Right ventricle myocardium inferior (tissue), 1 donor: ENCODE measurements at regions of chr1 and their contacts with region 1.

Region 1: GRCh38 chr1:27284425-27285273 is 37.3 kb upstream of the TMEM222 start:
- DNase-seq: peak; percentile 88
- ATAC-seq: peak; percentile 71

Region 2: DNA sequence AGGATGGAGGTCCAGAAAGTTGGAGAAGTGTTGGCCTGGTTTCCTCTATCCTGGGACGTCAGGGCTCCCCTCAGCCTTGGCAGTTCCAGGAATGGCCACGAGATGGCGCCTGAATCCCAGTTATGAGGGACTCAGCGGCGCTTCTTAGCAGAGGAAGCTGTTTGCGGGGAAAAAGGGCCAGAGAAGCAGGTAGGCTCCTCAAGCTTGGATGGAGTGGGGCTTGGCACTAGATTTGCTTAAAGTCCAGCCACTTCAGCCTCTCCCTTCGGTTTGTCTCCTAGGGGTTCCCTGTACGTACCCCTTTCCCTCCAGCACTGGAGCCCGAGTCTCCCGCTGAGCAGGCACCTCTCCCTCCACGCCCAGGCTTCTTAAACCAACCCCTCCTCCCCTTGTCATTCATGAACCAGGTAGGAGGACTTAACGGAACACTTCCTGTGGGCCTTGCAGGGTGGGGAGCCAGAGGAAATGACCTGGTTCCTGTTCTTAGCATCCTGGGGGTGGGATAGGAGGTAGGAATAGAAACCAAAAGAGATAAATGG is 240.0 kb before region 1 on chr1:
- intact Hi-C with region 1: loop called (anchors 5 kb)
- DNase-seq: peak; percentile 92
- ATAC-seq: peak; percentile 92

Region 3: DNA sequence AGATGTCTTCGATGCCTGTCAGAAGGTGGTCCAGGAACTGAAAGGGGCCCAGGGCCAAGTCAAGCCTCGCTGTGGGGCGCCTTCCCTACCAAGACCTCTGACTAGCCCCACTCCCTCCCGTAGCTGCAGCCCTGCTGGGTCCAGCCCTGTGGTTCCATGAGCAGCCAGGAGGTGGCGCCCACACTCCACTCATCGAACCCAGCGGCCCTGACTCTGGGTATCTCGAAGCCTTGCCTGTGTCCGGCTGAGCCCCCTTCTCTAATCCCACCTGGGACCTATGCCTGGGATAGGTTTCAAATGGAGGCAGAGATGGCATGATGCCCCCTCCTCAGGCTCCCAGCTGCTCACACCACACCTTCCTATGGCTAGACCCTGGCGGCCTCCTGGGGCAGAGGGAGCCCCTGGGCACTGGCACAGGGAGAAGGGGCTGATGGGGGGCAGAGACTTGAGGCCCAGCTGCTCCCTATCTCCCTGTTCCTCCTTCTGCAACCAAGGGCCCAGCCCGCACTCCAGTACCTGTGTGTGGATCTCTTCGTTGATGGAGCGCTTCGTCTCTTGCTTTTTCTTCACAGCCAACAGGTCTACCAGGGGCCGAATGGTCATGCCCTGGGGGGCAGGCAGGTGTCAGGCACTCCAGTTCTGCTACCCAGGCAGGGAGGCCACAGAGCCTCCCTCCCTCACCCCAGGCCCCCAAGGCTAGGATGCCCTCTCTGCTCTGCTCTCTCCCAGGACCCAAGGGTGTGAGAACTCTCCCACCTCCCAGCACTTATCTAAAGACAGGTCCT is 181.8 kb before region 1 on chr1:
- intact Hi-C with region 1: loop called (anchors 1 kb)
- DNase-seq: peak; percentile 88
- ATAC-seq: peak; percentile 34

Region 4: DNA sequence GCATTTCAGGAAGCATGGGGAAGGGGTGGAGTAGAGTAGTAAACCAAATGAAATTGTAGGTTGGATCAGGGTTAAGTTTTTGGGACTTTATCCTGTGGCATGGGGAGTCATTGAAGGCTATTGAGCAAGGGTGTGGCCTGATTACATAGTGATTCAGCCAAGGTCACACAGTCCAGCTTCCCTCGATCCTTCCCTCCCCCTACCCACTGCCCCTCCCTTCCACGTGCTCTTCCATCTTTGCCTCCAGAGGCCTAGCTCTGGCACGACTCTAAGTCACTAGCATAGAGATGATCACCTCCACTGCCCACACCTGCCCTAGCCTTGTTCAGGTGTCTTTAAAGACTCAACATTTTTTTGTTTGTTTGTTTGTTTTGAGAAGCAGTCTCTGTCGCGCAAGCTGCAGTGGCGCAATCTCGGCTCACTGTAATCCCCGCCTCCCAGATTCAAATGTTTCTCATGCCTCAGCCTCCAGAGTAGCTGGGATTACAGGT is 92.6 kb before region 1 on chr1:
- intact Hi-C with region 1: loop called (anchors 5 kb)
- DNase-seq: no peak
- ATAC-seq: no peak

Region 5: GRCh38 chr1:27388337-27389005 is 103.8 kb after region 1 on chr1:
- intact Hi-C with region 1: no loop called
- DNase-seq: no peak
- ATAC-seq: no peak

Region 6: GRCh38 chr1:27416387-27417111 is 131.9 kb after region 1 on chr1:
- intact Hi-C with region 1: no loop called
- DNase-seq: no peak
- ATAC-seq: no peak